ENCODE measurements at regions of chr20 and their contacts with region 1.

Region 1: DNA sequence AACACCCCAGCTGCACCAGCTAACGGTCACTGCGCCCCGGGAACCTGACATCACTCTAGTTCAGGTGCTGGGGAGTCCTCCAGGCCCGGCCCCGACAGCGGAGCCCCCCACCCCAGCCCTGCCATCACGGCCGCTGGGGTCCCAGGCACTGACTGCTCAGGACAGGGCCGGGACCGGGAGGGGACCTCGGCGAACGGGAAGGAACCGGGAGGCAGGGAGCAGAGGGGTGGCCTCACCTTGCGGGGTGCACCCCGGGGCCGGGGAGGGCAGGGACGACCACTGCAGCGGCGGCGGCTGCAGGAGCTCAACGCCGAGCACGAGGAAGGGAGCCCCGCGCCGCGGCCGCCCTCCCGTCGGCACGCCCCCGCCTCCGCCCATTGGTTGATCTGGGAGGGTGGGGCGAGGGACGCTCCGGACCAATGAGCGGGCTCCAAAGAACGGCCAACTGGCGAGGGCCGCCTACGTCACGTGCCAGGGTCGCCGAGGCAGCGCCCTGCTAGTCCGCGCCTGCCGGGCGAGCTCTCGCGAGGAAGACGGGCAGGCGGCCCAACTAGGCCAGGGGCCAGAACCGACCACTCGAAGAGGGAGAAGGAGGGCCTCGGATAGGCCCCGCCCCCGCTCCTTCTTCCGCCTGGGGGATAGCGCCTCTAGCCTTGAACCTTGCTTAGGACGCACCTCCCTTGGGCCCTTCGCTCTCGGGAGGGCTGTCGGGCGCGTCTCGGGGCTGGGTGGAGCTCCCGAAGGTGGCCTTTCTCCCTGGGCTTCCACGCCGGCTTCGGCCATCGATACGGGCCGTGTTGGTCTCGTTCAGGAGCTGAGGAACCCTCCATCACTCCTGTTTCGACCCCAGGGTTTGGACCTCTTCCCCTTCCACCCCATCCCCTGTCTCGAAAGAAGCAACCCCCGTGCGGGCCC is at the start of gene ADISSP:
- H3K4me3 Mint-ChIP-seq: peak within 1 kb of the TSS; percentile 91
- H3K27ac Mint-ChIP-seq: peak within 1 kb of the TSS; percentile 89
- H3K4me1 Mint-ChIP-seq: peaks cover 60% of the 10 kb centered on the region
- H3K27me3 Mint-ChIP-seq: no peaks in the 10 kb centered on the region

Region 2: DNA sequence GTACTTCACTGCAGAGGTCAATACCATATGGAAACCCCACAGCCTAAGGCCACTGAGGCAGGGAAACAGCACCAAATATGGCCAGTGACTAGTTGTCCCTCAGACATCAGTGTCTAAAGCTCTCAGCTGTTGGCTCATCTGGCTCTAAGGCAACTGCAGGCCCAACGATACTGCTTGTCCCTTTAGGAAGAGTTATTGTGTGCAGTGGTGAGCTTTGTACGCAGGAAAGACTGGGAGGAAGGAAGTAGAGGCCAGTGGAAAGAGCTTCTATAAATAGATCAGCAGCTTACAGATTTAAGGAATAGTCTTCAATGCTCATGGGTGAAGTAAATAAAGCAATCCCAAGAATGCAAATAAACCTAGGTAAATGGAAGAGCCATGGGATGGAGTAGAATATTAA is 389.5 kb before region 1 on chr20:
- intact Hi-C with region 1: no loop called
- H3K4me3 Mint-ChIP-seq: no peak overlapping the region
- H3K27ac Mint-ChIP-seq: no peak overlapping the region
- H3K4me1 Mint-ChIP-seq: peaks cover 20% of the 10 kb centered on the region
- H3K27me3 Mint-ChIP-seq: no peaks in the 10 kb centered on the region

Region 3: GRCh38 chr20:3781153-3781910 is 13.6 kb after region 1 on chr20 and contains the start of gene SPEF1:
- intact Hi-C with region 1: loop called (anchors 1 kb)
- H3K4me3 Mint-ChIP-seq: peak within 1 kb of the TSS; percentile 61
- H3K27ac Mint-ChIP-seq: peak within 1 kb of the TSS; percentile 51
- H3K4me1 Mint-ChIP-seq: peaks cover 82% of the 10 kb centered on the region
- H3K27me3 Mint-ChIP-seq: peaks cover 22% of the 10 kb centered on the region